Endothelial cell of umbilical vein (primary cell): ENCODE measurements at regions of chr20 and their contacts with region 1.

Region 1: GRCh38 chr20:45771182-45771759 is 20.4 kb downstream of the WFDC3 start:
- DNase-seq: peak; percentile 88
- H3K4me3 ChIP-seq: no peak overlapping the region
- H3K27ac ChIP-seq: no peak overlapping the region
- H3K4me1 ChIP-seq: no peaks in the 10 kb centered on the region
- H3K27me3 ChIP-seq: peaks cover 0 to 4% of the 10 kb centered on the region in 2 experiments
- CTCF ChIP-seq: peak; percentile 85 to 93
- POLR2A ChIP-seq: no peak

Region 2: GRCh38 chr20:45293041-45294002 is 477.9 kb before region 1 on chr20:
- CTCF ChIA-PET with region 1: interaction called, 42 read pairs
- POLR2A ChIA-PET with region 1: no interaction called
- dilution Hi-C with region 1: no loop called
- intact Hi-C with region 1: no loop called
- DNase-seq: peak; percentile 76
- H3K4me3 ChIP-seq: peak overlapping the region; percentile 33 to 51 (median 47)
- H3K27ac ChIP-seq: peak overlapping the region; percentile 37
- H3K4me1 ChIP-seq: peaks cover 9% of the 10 kb centered on the region
- H3K27me3 ChIP-seq: peaks cover 0 to 8% of the 10 kb centered on the region in 2 experiments
- CTCF ChIP-seq: peak; percentile 95 to 99
- POLR2A ChIP-seq: no peak

Region 3: DNA sequence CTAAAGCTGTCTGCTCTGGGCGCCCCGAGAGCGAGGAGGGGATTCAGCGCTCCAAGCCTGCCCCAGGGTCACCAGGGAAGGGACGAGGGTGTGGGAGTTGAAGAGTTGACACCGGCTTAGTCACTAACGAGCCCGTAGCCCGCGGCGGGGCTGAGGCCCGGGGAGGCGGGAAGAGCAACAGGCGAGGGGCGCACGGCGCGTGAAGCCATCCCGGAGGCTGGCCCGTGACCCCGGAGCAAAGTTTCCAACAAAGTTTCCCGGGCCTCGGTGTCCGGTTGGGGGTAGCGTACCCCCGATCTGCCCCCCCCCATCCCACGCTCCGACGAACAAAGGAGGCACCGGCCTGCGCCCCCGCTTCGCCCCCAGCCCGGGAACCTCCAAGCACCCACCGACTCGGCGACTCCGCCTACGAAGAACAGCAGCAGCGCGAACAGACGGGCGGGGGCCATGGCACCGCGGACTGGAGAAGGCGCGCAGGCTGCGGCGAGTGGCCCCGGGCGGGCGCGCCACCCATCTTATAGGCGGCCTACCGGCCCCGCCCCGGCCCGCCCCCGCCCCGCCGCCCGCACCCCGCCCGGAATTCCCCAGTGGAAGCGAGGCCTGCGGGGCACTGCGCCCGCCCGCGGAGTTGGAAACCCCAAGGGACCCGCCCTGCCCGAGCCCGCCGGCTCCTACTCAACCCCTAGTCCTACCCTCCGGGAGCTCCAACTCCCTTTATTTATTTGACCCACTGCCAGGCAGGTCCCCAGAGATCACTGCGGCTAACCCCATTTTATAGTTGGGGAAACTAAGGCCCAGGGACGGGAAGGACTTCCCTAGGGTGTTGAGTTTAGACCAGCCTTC is 423.1 kb before region 1 on chr20 and contains the start of gene SDC4:
- CTCF ChIA-PET with region 1: interaction called, 10 read pairs
- POLR2A ChIA-PET with region 1: no interaction called
- dilution Hi-C with region 1: no loop called
- intact Hi-C with region 1: no loop called
- DNase-seq: peak; percentile 44
- H3K4me3 ChIP-seq: peak within 1 kb of the TSS; percentile 50 to 85 (median 69)
- H3K27ac ChIP-seq: peak within 1 kb of the TSS; percentile 62
- H3K4me1 ChIP-seq: peaks cover 49% of the 10 kb centered on the region
- H3K27me3 ChIP-seq: no peaks in the 10 kb centered on the region
- CTCF ChIP-seq: no peak
- POLR2A ChIP-seq: peak; percentile 99
- total RNA-seq, gene SDC4: 28.7 and 32.0 TPM in 2 replicates

Region 4: GRCh38 chr20:45450097-45450818 is 321.0 kb before region 1 on chr20:
- CTCF ChIA-PET with region 1: interaction called, 88 read pairs
- POLR2A ChIA-PET with region 1: no interaction called
- dilution Hi-C with region 1: no loop called
- intact Hi-C with region 1: no loop called
- DNase-seq: peak; percentile 54
- H3K4me3 ChIP-seq: no peak overlapping the region
- H3K27ac ChIP-seq: no peak overlapping the region
- H3K4me1 ChIP-seq: no peaks in the 10 kb centered on the region
- H3K27me3 ChIP-seq: peaks cover 0 to 3% of the 10 kb centered on the region in 2 experiments
- CTCF ChIP-seq: peak; percentile 48 to 56
- POLR2A ChIP-seq: no peak

Region 5: DNA sequence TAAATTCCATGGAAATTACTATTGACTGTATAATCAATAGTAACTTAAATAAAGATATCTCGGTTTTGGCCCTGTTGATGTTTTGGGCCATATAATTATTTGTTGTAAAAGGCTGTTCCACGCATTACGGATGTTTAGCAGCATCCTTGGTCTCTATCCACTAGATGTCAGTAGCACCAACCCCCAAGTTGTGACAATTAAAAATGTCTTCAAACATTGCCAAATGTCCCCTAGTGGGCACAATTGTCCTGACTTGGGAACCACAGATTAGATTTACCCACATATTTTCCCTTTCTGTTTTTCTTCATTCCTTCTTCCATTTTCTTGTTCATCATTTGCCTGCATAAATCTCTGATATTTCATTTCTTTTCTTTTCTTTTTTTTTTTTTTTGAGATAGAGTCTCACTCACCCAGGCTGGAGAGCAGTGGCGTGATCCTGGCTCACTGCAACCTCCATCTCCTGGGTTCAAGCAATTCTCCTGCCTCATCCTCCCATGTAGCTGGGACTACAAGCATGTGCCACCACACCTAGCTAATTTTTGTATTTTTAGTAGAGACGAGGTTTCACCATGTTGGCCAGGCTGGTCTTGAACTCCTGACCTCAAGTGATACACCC is 178.6 kb before region 1 on chr20:
- CTCF ChIA-PET with region 1: interaction called, 15 read pairs
- POLR2A ChIA-PET with region 1: no interaction called
- dilution Hi-C with region 1: no loop called
- intact Hi-C with region 1: loop called (anchors 1 kb)
- DNase-seq: peak; percentile 13
- H3K4me3 ChIP-seq: no peak overlapping the region
- H3K27ac ChIP-seq: no peak overlapping the region
- H3K4me1 ChIP-seq: no peaks in the 10 kb centered on the region
- H3K27me3 ChIP-seq: peaks cover 0 to 2% of the 10 kb centered on the region in 2 experiments
- CTCF ChIP-seq: peak; percentile 46 to 49
- POLR2A ChIP-seq: no peak